ENCODE measurements at regions of chr9 and their contacts with region 1.

Region 1: DNA sequence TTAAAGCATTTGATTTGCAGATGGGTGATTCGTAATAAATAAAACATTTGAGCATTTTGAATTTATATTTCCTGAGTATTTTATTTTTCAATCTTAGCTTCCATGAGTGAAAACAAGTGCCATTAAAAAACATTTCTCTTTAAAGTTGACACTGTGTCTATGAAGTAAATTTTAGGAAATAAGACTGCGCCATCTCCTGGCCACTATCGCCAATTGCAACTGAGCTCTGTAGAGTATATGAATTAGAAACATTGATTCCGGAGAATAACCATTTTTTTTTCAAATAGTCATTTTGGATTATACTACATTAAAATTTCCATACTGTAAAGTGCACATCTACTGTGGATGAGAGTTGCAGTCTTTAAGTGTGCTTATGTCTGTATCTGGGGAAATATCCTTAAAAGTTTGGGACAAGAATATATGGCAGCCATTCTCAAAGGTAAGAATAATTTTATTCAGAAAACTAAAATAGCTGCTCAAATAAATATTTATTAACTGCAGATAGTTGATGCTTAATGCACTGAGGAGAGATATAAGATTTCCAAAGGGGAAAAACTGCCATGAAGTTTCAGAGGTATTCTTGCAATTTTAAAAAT is 5.9 kb downstream of the DMRTA1 start:
- DNase-seq: peak; percentile 61
- H3K4me3 Mint-ChIP-seq: no peak overlapping the region
- H3K27ac Mint-ChIP-seq: no peak overlapping the region
- H3K4me1 Mint-ChIP-seq: no peaks in the 10 kb centered on the region
- H3K27me3 Mint-ChIP-seq: peaks cover 18% of the 10 kb centered on the region

Region 2: DNA sequence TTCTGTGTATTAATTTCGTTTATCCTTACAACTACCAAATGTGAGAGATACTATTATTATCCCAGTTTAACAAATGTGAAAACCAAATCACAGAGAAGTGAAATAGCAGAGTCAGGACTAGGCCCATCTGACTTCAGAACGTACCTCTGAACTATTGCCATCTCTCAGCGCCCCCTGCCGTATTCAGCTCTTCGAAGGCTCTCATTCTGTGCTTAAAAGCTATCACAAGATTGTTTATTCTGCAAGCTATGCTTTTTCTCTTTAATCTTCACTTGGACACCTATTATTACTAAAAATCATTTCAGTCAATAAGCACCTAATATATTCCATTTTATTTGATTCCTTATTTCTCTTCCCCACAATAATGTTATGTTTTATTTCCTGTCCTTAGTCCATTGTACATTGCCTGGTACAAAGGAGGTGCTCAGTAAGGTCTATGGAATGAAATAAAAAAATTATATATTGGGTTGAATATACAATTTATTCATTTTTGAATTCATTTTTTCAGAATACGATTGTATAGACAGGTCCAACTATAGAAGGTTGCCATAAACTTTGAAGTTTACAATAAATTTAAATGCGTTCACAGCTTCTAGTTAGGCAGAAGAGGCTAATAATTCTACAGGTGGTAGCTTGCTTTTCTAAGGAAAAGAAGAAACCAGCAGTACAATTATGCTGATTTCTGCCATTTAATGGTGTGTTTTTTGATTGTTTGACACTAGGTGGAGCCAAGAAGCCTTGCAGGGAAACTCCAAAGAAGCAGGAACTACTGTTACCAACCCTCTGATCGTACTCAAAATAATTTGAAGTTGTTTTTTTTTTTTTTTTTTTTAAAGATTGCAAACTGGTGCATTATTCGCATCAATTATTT is 208.1 kb before region 1 on chr9:
- CTCF ChIA-PET with region 1: interaction called, 16 read pairs
- DNase-seq: peak; percentile 59
- H3K4me3 Mint-ChIP-seq: no peak overlapping the region
- H3K27ac Mint-ChIP-seq: no peak overlapping the region
- H3K4me1 Mint-ChIP-seq: peaks cover 18% of the 10 kb centered on the region
- H3K27me3 Mint-ChIP-seq: peaks cover 24% of the 10 kb centered on the region

Region 3: DNA sequence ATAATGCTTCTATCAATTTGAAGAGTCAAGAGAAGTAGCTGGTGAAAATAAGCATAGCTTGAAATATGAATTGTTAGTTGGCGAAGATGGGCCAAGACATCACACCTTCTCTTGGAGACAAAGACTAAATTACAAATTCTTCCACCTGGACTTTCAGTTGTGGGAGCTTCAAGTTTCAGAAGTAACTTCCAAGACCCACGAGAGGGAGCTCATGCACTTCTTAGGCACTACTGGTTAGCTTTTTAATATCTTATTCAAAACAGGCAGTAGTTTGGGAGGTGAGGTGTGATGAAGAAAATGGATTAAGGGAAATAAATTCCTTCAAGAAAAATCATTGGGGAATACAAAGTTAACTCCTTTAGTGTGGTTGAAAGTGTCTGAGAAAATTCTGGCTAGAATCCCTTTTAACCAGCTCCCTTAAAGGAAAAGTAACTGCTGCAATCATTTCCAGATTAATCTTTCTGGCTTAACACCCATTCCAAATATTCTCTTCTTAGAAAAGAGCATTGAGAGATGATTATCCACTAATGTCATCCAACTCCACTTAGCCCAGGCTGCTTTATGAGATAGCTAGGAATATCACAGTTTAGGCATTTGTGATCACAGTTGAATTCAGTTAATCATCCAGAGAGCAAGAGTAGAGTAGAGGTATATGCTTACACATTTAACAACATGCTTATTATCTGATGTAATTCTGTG is 145.4 kb before region 1 on chr9:
- CTCF ChIA-PET with region 1: interaction called, 10 read pairs
- DNase-seq: peak; percentile 22
- H3K4me3 Mint-ChIP-seq: no peak overlapping the region
- H3K27ac Mint-ChIP-seq: no peak overlapping the region
- H3K4me1 Mint-ChIP-seq: no peaks in the 10 kb centered on the region
- H3K27me3 Mint-ChIP-seq: no peaks in the 10 kb centered on the region